ENCODE measurements at regions of chr1 and their contacts with region 1.

Region 1: GRCh38 chr1:160193091-160193819 is 2.9 kb downstream of the CASQ1 start:
- DNase-seq: peak; percentile 86
- ATAC-seq: peak; percentile 69
- H3K4me3 Mint-ChIP-seq: no peak overlapping the region
- H3K27ac Mint-ChIP-seq: no peak overlapping the region
- H3K4me1 Mint-ChIP-seq: no peaks in the 10 kb centered on the region
- H3K27me3 Mint-ChIP-seq: peaks cover 4% of the 10 kb centered on the region

Region 2: GRCh38 chr1:160205242-160206035 is 12.2 kb after region 1 on chr1 and contains the start of gene PEA15:
- CTCF ChIA-PET with region 1: interaction called, 52 read pairs
- POLR2A ChIA-PET with region 1: no interaction called
- DNase-seq: peak; percentile 68
- ATAC-seq: peak; percentile 91
- H3K4me3 Mint-ChIP-seq: peak within 1 kb of the TSS; percentile 84
- H3K27ac Mint-ChIP-seq: peak within 1 kb of the TSS; percentile 86
- H3K4me1 Mint-ChIP-seq: peaks cover 26% of the 10 kb centered on the region
- H3K27me3 Mint-ChIP-seq: no peaks in the 10 kb centered on the region
- total RNA-seq, gene PEA15: 27.3 to 35.2 TPM

Region 3: DNA sequence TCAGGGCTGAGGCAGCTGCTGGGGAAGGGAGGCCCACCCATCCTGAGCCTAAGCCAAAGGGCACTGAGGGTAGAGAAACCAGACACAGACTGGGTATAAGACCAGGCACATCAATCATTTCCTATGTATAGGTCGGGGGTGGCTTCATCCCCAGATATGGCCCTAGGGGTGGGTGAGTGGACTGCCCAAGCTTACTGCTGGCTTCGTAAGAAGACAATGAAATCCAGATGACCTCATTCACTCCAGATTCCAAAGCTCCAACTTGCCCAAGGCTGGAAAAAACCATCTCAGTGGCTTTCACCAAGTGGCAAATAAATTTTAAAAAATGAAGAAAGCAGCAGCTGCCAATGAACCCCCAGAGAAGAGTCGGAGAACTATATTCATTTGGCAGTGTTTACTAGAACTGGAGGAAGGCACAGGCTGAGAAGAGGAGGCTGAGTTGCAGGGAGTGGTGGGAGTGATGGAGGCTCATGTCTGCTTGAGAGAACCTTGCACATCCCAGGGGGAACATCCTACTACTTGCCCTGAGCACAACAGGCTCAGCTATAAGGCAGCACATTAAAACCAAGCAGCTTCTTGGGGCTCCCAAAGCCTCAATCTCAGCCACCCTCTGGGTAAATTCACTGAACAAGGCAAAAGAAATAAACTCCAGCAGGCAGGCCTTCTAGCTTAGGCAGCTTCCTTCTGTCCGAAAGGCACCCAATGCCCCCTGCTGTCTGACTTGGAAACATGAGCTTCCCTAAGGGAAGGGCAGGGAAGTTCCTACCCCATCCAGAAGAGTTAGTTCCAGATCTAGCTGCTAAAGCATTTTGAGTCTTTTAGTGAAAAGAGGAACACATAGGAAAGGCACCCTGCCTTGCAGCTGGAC is 26.0 kb after region 1 on chr1:
- CTCF ChIA-PET with region 1: interaction called, 10 read pairs
- POLR2A ChIA-PET with region 1: no interaction called
- DNase-seq: no peak
- ATAC-seq: no peak
- H3K4me3 Mint-ChIP-seq: no peak overlapping the region
- H3K27ac Mint-ChIP-seq: no peak overlapping the region
- H3K4me1 Mint-ChIP-seq: no peaks in the 10 kb centered on the region
- H3K27me3 Mint-ChIP-seq: no peaks in the 10 kb centered on the region

Region 4: GRCh38 chr1:160226623-160227022 is 33.4 kb after region 1 on chr1:
- CTCF ChIA-PET with region 1: interaction called, 17 read pairs
- POLR2A ChIA-PET with region 1: no interaction called
- DNase-seq: no peak
- ATAC-seq: no peak
- H3K4me3 Mint-ChIP-seq: no peak overlapping the region
- H3K27ac Mint-ChIP-seq: no peak overlapping the region
- H3K4me1 Mint-ChIP-seq: no peaks in the 10 kb centered on the region
- H3K27me3 Mint-ChIP-seq: no peaks in the 10 kb centered on the region